Activated T-helper 2 cell treated with anti-CD3 and anti-CD28 coated beads, Interferon-gamma antibody, Interleukin-2, Interleukin-4, amounts not matched to agents 10 μg/mL and 5 μg/mL and 100 μg/mL, durations not matched to agents 14 hours and 24 hours and 36 hours (primary cell): ENCODE measurements at regions of chr15 and their contacts with region 1.

Region 1: GRCh38 chr15:41957021-41957897 is 15.1 kb downstream of the EHD4 start:
- DNase-seq: no peak
- H3K4me3 Mint-ChIP-seq: peak overlapping the region; percentile 40
- H3K27ac Mint-ChIP-seq: peak overlapping the region; percentile 1
- H3K4me1 Mint-ChIP-seq: peaks cover 32% of the 10 kb centered on the region
- H3K27me3 Mint-ChIP-seq: no peaks in the 10 kb centered on the region

Region 2: DNA sequence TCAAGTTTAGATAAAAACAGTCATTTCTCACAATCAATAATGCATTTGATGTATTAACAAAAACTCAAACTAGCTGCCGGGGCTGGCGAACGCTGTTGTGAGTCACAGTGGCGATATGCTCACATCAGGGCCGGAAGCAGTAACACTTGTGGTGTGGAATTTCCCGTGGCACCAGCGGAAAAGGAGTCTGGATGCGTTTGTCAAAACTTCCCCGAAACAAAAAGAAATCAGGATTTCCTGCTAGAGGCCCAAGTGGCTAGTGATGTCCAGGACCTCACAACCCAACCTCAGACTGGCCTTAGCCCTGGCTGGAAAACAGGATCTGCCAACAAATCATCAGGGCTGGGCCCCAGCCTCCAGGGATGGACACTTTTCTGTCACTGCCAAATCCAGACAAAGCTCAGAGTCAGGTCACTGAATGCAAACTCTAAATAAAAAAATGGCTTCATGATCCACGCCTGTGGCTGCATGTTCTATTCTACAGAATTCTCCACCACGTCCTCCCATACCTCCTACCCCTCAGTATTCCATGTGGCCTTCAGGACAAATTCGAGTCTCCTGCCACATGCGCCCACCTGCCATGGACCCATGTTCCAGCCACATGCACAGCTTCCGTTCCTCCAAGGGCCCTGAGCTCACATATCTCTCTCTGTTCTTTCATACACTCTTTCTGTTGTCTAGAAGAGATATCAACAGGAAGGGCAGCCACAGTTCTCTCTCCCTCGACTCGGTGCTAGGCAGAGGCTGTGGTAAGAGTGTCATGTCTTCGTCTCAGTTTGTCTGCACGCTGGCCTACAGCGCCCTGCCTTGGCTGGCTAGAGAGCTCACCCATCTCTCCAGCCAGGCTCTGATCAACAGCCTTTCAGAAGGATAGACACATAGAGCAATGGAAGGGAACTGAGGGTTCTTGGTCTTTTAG is 20.4 kb before region 1 on chr15:
- intact Hi-C with region 1: loop called (anchors 1 kb)
- DNase-seq: peak; percentile 71
- H3K4me3 Mint-ChIP-seq: peak overlapping the region; percentile 69
- H3K27ac Mint-ChIP-seq: peak overlapping the region; percentile 100
- H3K4me1 Mint-ChIP-seq: peaks cover 60% of the 10 kb centered on the region
- H3K27me3 Mint-ChIP-seq: no peaks in the 10 kb centered on the region